ENCODE measurements at regions of chr13 and their contacts with region 1.

Region 1: DNA sequence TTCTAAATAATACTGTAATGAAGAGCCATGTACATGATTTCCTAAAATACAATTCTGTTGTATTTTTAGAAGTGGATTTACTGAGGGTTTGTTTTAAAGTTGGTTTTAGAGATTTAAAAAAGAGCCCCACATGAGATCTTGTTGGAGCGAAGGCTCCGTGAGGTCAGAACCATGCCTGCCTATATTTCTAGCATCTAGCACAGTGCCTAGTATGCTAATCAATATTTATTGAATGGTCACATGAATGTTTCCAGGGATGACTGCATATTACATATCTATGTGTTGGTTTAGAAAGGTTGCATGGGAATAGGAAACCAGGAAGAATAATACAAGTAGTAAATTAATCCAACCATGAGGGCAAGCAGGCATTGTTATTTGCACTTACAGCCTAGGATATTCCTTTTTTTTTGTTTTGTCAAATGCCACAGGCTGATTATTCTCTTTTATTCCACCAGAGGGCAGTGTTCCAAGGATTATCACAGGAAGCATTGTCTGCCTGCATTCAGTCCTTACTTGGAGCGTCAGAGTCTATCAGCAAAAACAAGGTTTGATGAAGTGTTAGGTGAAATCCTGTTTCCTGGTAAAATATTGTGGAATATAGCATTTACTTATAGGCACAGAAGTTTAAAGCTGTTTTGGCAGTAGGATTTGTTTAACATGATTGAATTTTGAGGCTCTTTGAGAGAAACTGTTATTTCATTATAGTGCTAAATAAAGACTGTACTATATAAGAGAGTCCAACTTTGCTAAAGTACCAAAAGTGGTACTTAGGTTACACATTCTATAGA is 46.8 kb downstream of the COG3 start:
- DNase-seq: peak; percentile 35
- ATAC-seq: peak; percentile 86
- H3K4me3 Mint-ChIP-seq: no peak overlapping the region
- H3K27ac Mint-ChIP-seq: peak overlapping the region; percentile 76
- H3K4me1 Mint-ChIP-seq: peaks cover 18% of the 10 kb centered on the region
- H3K27me3 Mint-ChIP-seq: no peaks in the 10 kb centered on the region
- CTCF ChIP-seq: peak; percentile 96

Region 2: GRCh38 chr13:44930963-44931623 is 580.4 kb before region 1 on chr13:
- CTCF ChIA-PET with region 1: no interaction called
- POLR2A ChIA-PET with region 1: no interaction called
- intact Hi-C with region 1: no loop called
- DNase-seq: no peak
- ATAC-seq: no peak
- H3K4me3 Mint-ChIP-seq: no peak overlapping the region
- H3K27ac Mint-ChIP-seq: no peak overlapping the region
- H3K4me1 Mint-ChIP-seq: peaks cover 8% of the 10 kb centered on the region
- H3K27me3 Mint-ChIP-seq: peaks cover 4% of the 10 kb centered on the region
- CTCF ChIP-seq: no peak

Region 3: GRCh38 chr13:45718063-45718462 is 206.6 kb after region 1 on chr13:
- CTCF ChIA-PET with region 1: interaction called, 3 read pairs
- POLR2A ChIA-PET with region 1: no interaction called
- intact Hi-C with region 1: loop called (anchors 10 kb)
- DNase-seq: no peak
- ATAC-seq: peak; percentile 55
- H3K4me3 Mint-ChIP-seq: no peak overlapping the region
- H3K27ac Mint-ChIP-seq: no peak overlapping the region
- H3K4me1 Mint-ChIP-seq: no peaks in the 10 kb centered on the region
- H3K27me3 Mint-ChIP-seq: peaks cover 3% of the 10 kb centered on the region
- CTCF ChIP-seq: peak; percentile 68